CD4-positive, alpha-beta T cell (primary cell): ENCODE measurements at regions of chr16 and their contacts with region 1.

Region 1: GRCh38 chr16:12846592-12846991 is 42.9 kb upstream of the CPPED1 start:
- DNase-seq: no peak
- ATAC-seq: no peak
- H3K4me3 ChIP-seq: no peak overlapping the region
- H3K4me3 Mint-ChIP-seq: no peak overlapping the region
- H3K27ac ChIP-seq: no peak overlapping the region
- H3K27ac Mint-ChIP-seq: no peak overlapping the region
- H3K4me1 ChIP-seq: no peaks in the 10 kb centered on the region
- H3K4me1 Mint-ChIP-seq: no peaks in the 10 kb centered on the region
- H3K27me3 ChIP-seq: no peaks in the 10 kb centered on the region
- H3K27me3 Mint-ChIP-seq: peaks cover 25% of the 10 kb centered on the region
- CTCF ChIP-seq: no peak

Region 2: GRCh38 chr16:10859758-10860057 is 1986.9 kb before region 1 on chr16:
- CTCF ChIA-PET with region 1: no interaction called
- POLR2A ChIA-PET with region 1: no interaction called
- intact Hi-C with region 1: loop called in 1 of 2 experiments (anchors 10 kb)
- DNase-seq: no peak
- ATAC-seq: no peak
- H3K4me3 ChIP-seq: no peak overlapping the region
- H3K4me3 Mint-ChIP-seq: no peak overlapping the region
- H3K27ac ChIP-seq: no peak overlapping the region
- H3K27ac Mint-ChIP-seq: no peak overlapping the region
- H3K4me1 ChIP-seq: no peaks in the 10 kb centered on the region
- H3K4me1 Mint-ChIP-seq: no peaks in the 10 kb centered on the region
- H3K27me3 ChIP-seq: peaks cover under 1 to 6% of the 10 kb centered on the region in 2 experiments
- H3K27me3 Mint-ChIP-seq: peaks cover 10% of the 10 kb centered on the region
- CTCF ChIP-seq: no peak

Region 3: GRCh38 chr16:12833957-12834356 is 12.6 kb before region 1 on chr16:
- CTCF ChIA-PET with region 1: no interaction called
- POLR2A ChIA-PET with region 1: no interaction called
- intact Hi-C with region 1: no loop called
- DNase-seq: no peak
- ATAC-seq: no peak
- H3K4me3 ChIP-seq: no peak overlapping the region
- H3K4me3 Mint-ChIP-seq: no peak overlapping the region
- H3K27ac ChIP-seq: no peak overlapping the region
- H3K27ac Mint-ChIP-seq: no peak overlapping the region
- H3K4me1 ChIP-seq: no peaks in the 10 kb centered on the region
- H3K4me1 Mint-ChIP-seq: no peaks in the 10 kb centered on the region
- H3K27me3 ChIP-seq: peaks cover 0 to 6% of the 10 kb centered on the region in 2 experiments
- H3K27me3 Mint-ChIP-seq: peaks cover 56% of the 10 kb centered on the region
- CTCF ChIP-seq: no peak